MCF 10A (cell line): ENCODE measurements at regions of chr2 and their contacts with region 1.

Region 1: DNA sequence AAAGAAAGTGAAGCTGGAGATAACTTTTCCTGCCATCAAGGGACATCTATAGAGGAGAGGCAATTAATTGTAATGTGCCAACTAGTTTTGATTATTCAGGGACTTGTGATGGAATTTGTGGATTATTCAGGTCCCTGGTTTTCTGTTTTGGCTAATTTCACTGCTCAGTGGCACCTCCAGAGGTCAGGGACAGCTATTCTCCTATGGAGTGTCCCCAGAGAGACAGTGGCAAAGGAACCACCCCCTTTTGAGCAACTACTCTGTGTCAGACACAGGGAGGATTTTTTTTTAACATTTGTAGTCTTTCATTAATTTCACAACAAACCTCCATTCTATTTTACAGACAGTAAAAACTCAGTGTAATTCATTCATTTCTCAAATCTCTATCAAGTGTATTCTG is 206.0 kb upstream of the SPRED2 start:
- DNase-seq: no peak
- H3K4me3 Mint-ChIP-seq: no peak overlapping the region
- H3K27ac Mint-ChIP-seq: no peak overlapping the region
- H3K4me1 Mint-ChIP-seq: peaks cover 28% of the 10 kb centered on the region
- H3K27me3 Mint-ChIP-seq: no peaks in the 10 kb centered on the region
- CTCF ChIP-seq: no peak

Region 2: GRCh38 chr2:64978514-64979268 is 659.8 kb before region 1 on chr2:
- CTCF ChIA-PET with region 1: no interaction called
- POLR2A ChIA-PET with region 1: no interaction called
- intact Hi-C with region 1: no loop called
- DNase-seq: peak; percentile 45
- H3K4me3 Mint-ChIP-seq: no peak overlapping the region
- H3K27ac Mint-ChIP-seq: no peak overlapping the region
- H3K4me1 Mint-ChIP-seq: peaks cover 32% of the 10 kb centered on the region
- H3K27me3 Mint-ChIP-seq: no peaks in the 10 kb centered on the region
- CTCF ChIP-seq: no peak

Region 3: GRCh38 chr2:65583061-65583460 is 55.4 kb before region 1 on chr2:
- CTCF ChIA-PET with region 1: no interaction called
- POLR2A ChIA-PET with region 1: no interaction called
- intact Hi-C with region 1: no loop called
- DNase-seq: no peak
- H3K4me3 Mint-ChIP-seq: no peak overlapping the region
- H3K27ac Mint-ChIP-seq: no peak overlapping the region
- H3K4me1 Mint-ChIP-seq: no peaks in the 10 kb centered on the region
- H3K27me3 Mint-ChIP-seq: no peaks in the 10 kb centered on the region
- CTCF ChIP-seq: no peak

Region 4: GRCh38 chr2:65613968-65614555 is 24.4 kb before region 1 on chr2:
- CTCF ChIA-PET with region 1: no interaction called
- POLR2A ChIA-PET with region 1: interaction called, 18 read pairs
- intact Hi-C with region 1: no loop called
- DNase-seq: no peak
- H3K4me3 Mint-ChIP-seq: no peak overlapping the region
- H3K27ac Mint-ChIP-seq: peak overlapping the region; percentile 98
- H3K4me1 Mint-ChIP-seq: peaks cover 26% of the 10 kb centered on the region
- H3K27me3 Mint-ChIP-seq: no peaks in the 10 kb centered on the region
- CTCF ChIP-seq: no peak

Region 5: DNA sequence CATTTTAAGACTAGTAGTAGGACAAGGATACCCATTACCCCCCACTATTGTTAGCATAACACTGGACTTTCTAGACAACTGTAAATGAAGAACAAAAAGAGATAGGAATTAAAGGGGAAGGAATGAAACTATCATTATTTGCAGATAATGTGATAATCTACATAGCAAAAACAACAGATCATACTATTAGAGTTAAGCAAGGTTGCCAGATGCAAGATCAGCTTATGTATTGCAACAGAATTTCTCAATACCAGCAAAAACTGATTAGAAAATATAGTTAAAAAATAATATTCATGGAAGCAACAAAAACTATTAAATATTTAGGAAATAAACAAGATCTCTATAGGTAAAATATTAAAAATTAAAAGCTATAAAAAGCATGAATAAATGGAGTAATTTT is 11.6 kb before region 1 on chr2:
- CTCF ChIA-PET with region 1: interaction called, 9 read pairs
- POLR2A ChIA-PET with region 1: interaction called, 12 read pairs
- intact Hi-C with region 1: no loop called
- DNase-seq: no peak
- H3K4me3 Mint-ChIP-seq: no peak overlapping the region
- H3K27ac Mint-ChIP-seq: no peak overlapping the region
- H3K4me1 Mint-ChIP-seq: peaks cover 30% of the 10 kb centered on the region
- H3K27me3 Mint-ChIP-seq: no peaks in the 10 kb centered on the region
- CTCF ChIP-seq: no peak

Region 6: DNA sequence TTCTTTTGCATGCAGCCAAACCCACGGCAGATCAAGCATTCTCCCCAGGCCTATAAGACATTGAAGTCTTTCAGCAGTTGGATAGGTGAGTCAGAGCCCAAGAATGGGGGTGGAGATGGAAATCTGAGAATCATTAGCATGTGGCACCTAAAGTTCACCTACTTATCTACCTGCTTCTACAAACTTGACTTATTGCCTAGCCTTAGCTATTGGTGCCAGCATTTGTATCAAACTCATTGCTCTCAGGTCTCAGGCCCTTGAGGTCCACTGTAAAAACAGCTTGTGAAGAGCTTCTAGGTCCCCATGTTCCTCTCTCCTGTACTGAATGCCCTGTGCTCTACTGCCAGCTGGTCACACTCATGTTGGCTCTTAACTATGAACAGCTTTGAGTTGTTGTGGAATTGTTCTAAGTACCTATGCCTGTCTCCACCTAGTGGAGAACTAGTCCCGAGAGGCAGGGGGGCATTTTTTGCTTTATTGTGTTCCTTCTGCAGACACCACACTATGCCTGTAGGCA is 72.4 kb after region 1 on chr2:
- CTCF ChIA-PET with region 1: interaction called, 11 read pairs
- POLR2A ChIA-PET with region 1: interaction called, 3 read pairs
- intact Hi-C with region 1: loop called (anchors 1 kb)
- DNase-seq: peak; percentile 43
- H3K4me3 Mint-ChIP-seq: no peak overlapping the region
- H3K27ac Mint-ChIP-seq: no peak overlapping the region
- H3K4me1 Mint-ChIP-seq: peaks cover 16% of the 10 kb centered on the region
- H3K27me3 Mint-ChIP-seq: no peaks in the 10 kb centered on the region
- CTCF ChIP-seq: no peak

Region 7: GRCh38 chr2:65800998-65801397 is 162.6 kb after region 1 on chr2:
- CTCF ChIA-PET with region 1: interaction called, 5 read pairs
- POLR2A ChIA-PET with region 1: no interaction called
- intact Hi-C with region 1: loop called (anchors 1 kb)
- DNase-seq: peak; percentile 49
- H3K4me3 Mint-ChIP-seq: no peak overlapping the region
- H3K27ac Mint-ChIP-seq: no peak overlapping the region
- H3K4me1 Mint-ChIP-seq: no peaks in the 10 kb centered on the region
- H3K27me3 Mint-ChIP-seq: no peaks in the 10 kb centered on the region
- CTCF ChIP-seq: no peak

Region 8: GRCh38 chr2:66201209-66201608 is 562.8 kb after region 1 on chr2:
- CTCF ChIA-PET with region 1: no interaction called
- POLR2A ChIA-PET with region 1: no interaction called
- intact Hi-C with region 1: no loop called
- DNase-seq: no peak
- H3K4me3 Mint-ChIP-seq: no peak overlapping the region
- H3K27ac Mint-ChIP-seq: no peak overlapping the region
- H3K4me1 Mint-ChIP-seq: no peaks in the 10 kb centered on the region
- H3K27me3 Mint-ChIP-seq: peaks cover 11% of the 10 kb centered on the region
- CTCF ChIP-seq: no peak